Activated naive CD4-positive, alpha-beta T cell treated with anti-CD3 and anti-CD28 coated beads for 36 hours (primary cell): ENCODE measurements at regions of chr10 and their contacts with region 1.

Region 1: DNA sequence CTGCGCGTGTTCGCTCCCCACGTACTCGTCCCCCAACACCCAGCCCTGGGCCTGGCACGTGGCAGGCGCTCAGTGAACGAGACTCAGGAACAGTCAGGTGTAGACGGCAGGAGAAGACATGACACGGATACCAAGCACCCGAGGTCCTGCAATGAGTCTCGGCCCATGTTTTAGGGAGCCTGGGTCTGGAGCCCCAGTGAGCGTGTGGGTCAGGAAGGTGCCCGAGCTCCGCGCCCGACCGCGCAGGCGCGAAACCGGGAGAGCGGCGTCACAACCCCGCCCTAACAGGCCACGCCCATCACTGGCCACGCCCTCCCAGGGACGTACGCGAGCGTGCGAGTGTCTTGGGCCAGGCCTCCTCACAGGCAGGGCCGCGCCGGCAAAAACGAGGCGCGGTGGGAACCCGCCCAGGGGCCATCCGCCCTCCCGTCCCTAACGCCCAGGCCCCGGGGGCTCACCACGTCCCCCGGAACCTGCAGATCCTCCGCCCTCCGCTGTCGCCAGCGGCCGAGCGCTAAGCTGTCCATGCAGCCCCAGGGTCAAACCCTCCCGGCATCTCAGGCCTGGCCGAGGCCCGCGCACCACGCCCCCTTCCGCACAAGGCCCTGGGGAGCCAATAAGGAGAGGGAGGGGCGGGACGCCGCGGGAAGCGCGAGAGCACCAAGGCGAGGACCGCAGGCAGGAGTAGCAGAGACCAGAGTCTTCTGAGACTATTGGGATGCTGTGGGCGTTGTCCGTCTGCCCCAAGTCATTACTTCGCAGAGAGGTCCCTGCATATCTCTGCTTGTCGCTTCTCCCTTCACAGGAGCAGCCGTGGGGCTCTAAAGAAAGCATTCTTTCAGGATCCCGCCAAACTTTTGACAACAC is at the start of gene C10orf143:
- DNase-seq: peak; percentile 96
- H3K4me3 Mint-ChIP-seq: peak within 1 kb of the TSS; percentile 83
- H3K27ac Mint-ChIP-seq: peak within 1 kb of the TSS; percentile 99
- H3K4me1 Mint-ChIP-seq: peaks cover 45% of the 10 kb centered on the region
- H3K27me3 Mint-ChIP-seq: no peaks in the 10 kb centered on the region
- total RNA-seq, gene C10orf143: 3.3 to 3.5 TPM

Region 2: GRCh38 chr10:129466703-129467358 is 643.6 kb before region 1 on chr10 and contains the start of gene MGMT:
- CTCF ChIA-PET with region 1: interaction called, 3 read pairs
- intact Hi-C with region 1: loop called (anchors 1 kb)
- DNase-seq: peak; percentile 98
- H3K4me3 Mint-ChIP-seq: peak within 1 kb of the TSS; percentile 78
- H3K27ac Mint-ChIP-seq: peak within 1 kb of the TSS; percentile 70
- H3K4me1 Mint-ChIP-seq: peaks cover 14% of the 10 kb centered on the region
- H3K27me3 Mint-ChIP-seq: no peaks in the 10 kb centered on the region
- total RNA-seq, gene MGMT: 24.6 to 26.0 TPM

Region 3: GRCh38 chr10:130127364-130128061 is 17.0 kb after region 1 on chr10:
- CTCF ChIA-PET with region 1: interaction called, 10 read pairs
- intact Hi-C with region 1: loop called (anchors 1 kb)
- DNase-seq: peak; percentile 73
- H3K4me3 Mint-ChIP-seq: no peak overlapping the region
- H3K27ac Mint-ChIP-seq: no peak overlapping the region
- H3K4me1 Mint-ChIP-seq: peaks cover 5% of the 10 kb centered on the region
- H3K27me3 Mint-ChIP-seq: peaks cover 26% of the 10 kb centered on the region

Region 4: GRCh38 chr10:130136226-130137089 is 26.0 kb after region 1 on chr10 and contains the start of gene GLRX3:
- CTCF ChIA-PET with region 1: interaction called, 21 read pairs
- intact Hi-C with region 1: loop called (anchors 1 kb)
- DNase-seq: peak; percentile 86
- H3K4me3 Mint-ChIP-seq: peak within 1 kb of the TSS; percentile 91
- H3K27ac Mint-ChIP-seq: peak within 1 kb of the TSS; percentile 75
- H3K4me1 Mint-ChIP-seq: peaks cover 48% of the 10 kb centered on the region
- H3K27me3 Mint-ChIP-seq: peaks cover 6% of the 10 kb centered on the region
- total RNA-seq, gene GLRX3: 86.2 to 86.5 TPM

Region 5: GRCh38 chr10:130179640-130180039 is 69.2 kb after region 1 on chr10:
- CTCF ChIA-PET with region 1: interaction called, 3 read pairs
- intact Hi-C with region 1: loop called (anchors 2 kb)
- DNase-seq: peak; percentile 70
- H3K4me3 Mint-ChIP-seq: no peak overlapping the region
- H3K27ac Mint-ChIP-seq: no peak overlapping the region
- H3K4me1 Mint-ChIP-seq: peaks cover 5% of the 10 kb centered on the region
- H3K27me3 Mint-ChIP-seq: no peaks in the 10 kb centered on the region

Region 6: GRCh38 chr10:130301021-130301892 is 190.8 kb after region 1 on chr10:
- CTCF ChIA-PET with region 1: no interaction called
- intact Hi-C with region 1: loop called (anchors 2 kb)
- DNase-seq: peak; percentile 63
- H3K4me3 Mint-ChIP-seq: peak overlapping the region; percentile 71
- H3K27ac Mint-ChIP-seq: peak overlapping the region; percentile 81
- H3K4me1 Mint-ChIP-seq: no peaks in the 10 kb centered on the region
- H3K27me3 Mint-ChIP-seq: peaks cover 6% of the 10 kb centered on the region

Region 7: DNA sequence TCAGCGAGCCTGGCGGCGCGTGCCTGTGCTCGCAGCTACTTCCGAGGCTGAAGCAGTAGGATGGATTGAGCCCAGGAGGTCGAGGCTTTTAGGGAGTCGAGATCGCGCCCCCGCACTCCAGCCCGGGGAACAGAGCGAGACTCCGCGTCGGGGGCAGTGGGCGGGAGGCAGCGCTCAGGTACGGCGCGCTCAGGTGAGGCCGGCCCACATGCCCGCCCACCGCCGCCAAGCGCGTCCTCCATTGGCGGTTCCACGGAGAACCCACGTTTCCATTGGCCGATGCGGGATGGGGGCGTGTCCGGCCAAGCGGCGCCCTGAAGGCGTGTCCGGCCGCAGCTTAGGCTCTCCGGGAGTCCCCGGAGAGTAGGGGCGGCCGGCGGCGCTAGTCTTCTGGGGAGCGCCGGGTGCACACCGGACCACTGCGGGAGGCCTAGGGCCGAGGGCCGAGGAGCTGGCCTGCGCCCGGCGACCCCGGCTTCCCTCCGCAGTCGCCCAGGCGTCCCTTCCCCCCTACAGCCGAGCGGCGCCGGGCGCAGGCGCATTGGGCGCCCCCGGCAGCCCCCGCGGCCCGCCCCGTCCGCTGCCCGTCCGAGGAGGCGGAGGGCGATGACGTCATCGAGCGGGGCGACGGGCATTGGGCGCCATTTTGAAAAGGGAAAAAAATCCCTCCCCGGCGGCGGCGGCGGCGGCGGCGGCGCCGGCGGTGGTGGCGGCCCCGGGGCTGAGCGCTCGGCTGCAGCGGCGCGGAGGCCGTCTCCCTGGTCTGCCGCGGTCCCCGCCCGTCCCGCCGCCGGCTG is 1790.1 kb after region 1 on chr10 and contains the start of gene PPP2R2D:
- CTCF ChIA-PET with region 1: no interaction called
- intact Hi-C with region 1: loop called (anchors 2 kb)
- DNase-seq: peak; percentile 94
- H3K4me3 Mint-ChIP-seq: peak within 1 kb of the TSS; percentile 87
- H3K27ac Mint-ChIP-seq: peak within 1 kb of the TSS; percentile 92
- H3K4me1 Mint-ChIP-seq: peaks cover 47% of the 10 kb centered on the region
- H3K27me3 Mint-ChIP-seq: peaks cover 4% of the 10 kb centered on the region
- total RNA-seq, gene PPP2R2D: 31.5 to 34.7 TPM